GM12878 (cell line): ENCODE measurements at regions of chr12 and their contacts with region 1.

Region 1: GRCh38 chr12:29427964-29428363 is 47.0 kb upstream of the ERGIC2 start:
- DNase-seq: peak; percentile 37
- ATAC-seq: peak; percentile 98
- H3K4me3 ChIP-seq: no peak overlapping the region
- H3K27ac ChIP-seq: no peak overlapping the region
- H3K4me1 ChIP-seq: peaks cover 3% of the 10 kb centered on the region; the same call in 1 of the 2 replicates
- H3K27me3 ChIP-seq: no peaks in the 10 kb centered on the region
- CTCF ChIP-seq: peak; percentile 47 to 63 (median 55)
- EP300 ChIP-seq: peak in 1 of 2 experiments; percentile 64; a peak in 1 of 4 replicates
- POLR2A ChIP-seq: no peak
- RAD21 ChIP-seq: peak; percentile 48

Region 2: GRCh38 chr12:29073628-29074239 is 354.2 kb before region 1 on chr12:
- CTCF ChIA-PET with region 1: interaction called, 3 read pairs
- POLR2A ChIA-PET with region 1: no interaction called
- RAD21 ChIA-PET with region 1: no interaction called
- SMC1A ChIA-PET with region 1: interaction called, 4 read pairs
- in situ Hi-C with region 1: no loop called
- intact Hi-C with region 1: loop called (anchors 5 kb)
- DNase-seq: no peak
- ATAC-seq: peak; percentile 87
- H3K4me3 ChIP-seq: no peak overlapping the region
- H3K27ac ChIP-seq: no peak overlapping the region
- H3K4me1 ChIP-seq: no peaks in the 10 kb centered on the region
- H3K27me3 ChIP-seq: no peaks in the 10 kb centered on the region
- CTCF ChIP-seq: peak; percentile 54 to 68 (median 67); a peak in 5 of 6 replicates
- EP300 ChIP-seq: no peak
- POLR2A ChIP-seq: no peak
- RAD21 ChIP-seq: peak; percentile 68

Region 3: DNA sequence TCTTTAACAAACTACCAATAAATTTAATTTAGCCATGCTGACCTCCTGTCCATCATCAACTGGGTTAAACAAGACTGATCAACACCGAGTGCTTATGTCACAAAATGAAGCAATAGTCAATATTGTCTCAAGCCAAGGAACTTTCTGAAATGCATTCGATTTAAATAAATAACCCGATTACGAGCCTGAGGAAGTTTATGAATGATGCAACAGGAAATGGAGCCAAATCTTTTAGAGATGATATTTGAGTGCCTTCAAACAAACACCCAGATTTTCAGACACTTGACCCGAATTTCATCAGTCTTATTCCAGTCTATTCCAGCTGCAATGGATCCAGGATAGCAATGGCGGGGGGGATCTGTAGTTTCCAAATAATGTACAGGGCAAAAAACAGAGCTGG is 251.0 kb before region 1 on chr12:
- CTCF ChIA-PET with region 1: no interaction called
- POLR2A ChIA-PET with region 1: no interaction called
- RAD21 ChIA-PET with region 1: no interaction called
- SMC1A ChIA-PET with region 1: no interaction called
- in situ Hi-C with region 1: no loop called
- intact Hi-C with region 1: no loop called
- DNase-seq: no peak
- ATAC-seq: no peak
- H3K4me3 ChIP-seq: no peak overlapping the region
- H3K27ac ChIP-seq: no peak overlapping the region
- H3K4me1 ChIP-seq: no peaks in the 10 kb centered on the region
- H3K27me3 ChIP-seq: no peaks in the 10 kb centered on the region
- CTCF ChIP-seq: no peak
- EP300 ChIP-seq: no peak
- POLR2A ChIP-seq: no peak
- RAD21 ChIP-seq: no peak

Region 4: GRCh38 chr12:29309320-29309902 is 118.6 kb before region 1 on chr12:
- CTCF ChIA-PET with region 1: interaction called, 7 read pairs
- POLR2A ChIA-PET with region 1: no interaction called
- RAD21 ChIA-PET with region 1: interaction called, 3 read pairs
- SMC1A ChIA-PET with region 1: no interaction called
- in situ Hi-C with region 1: no loop called
- intact Hi-C with region 1: loop called (anchors 2 kb)
- DNase-seq: no peak
- ATAC-seq: no peak
- H3K4me3 ChIP-seq: no peak overlapping the region
- H3K27ac ChIP-seq: no peak overlapping the region
- H3K4me1 ChIP-seq: no peaks in the 10 kb centered on the region
- H3K27me3 ChIP-seq: no peaks in the 10 kb centered on the region
- CTCF ChIP-seq: peak in 2 of 3 experiments; percentile 2 to 21; a peak in 1 of 6 replicates
- EP300 ChIP-seq: no peak
- POLR2A ChIP-seq: no peak
- RAD21 ChIP-seq: peak; percentile 47

Region 5: GRCh38 chr12:29380536-29381523 is 47.1 kb before region 1 on chr12 and contains the start of gene ERGIC2:
- CTCF ChIA-PET with region 1: interaction called, 7 read pairs
- POLR2A ChIA-PET with region 1: no interaction called
- RAD21 ChIA-PET with region 1: interaction called, 5 read pairs
- SMC1A ChIA-PET with region 1: interaction called, 4 read pairs
- in situ Hi-C with region 1: no loop called
- intact Hi-C with region 1: loop called (anchors 2 kb)
- DNase-seq: peak; percentile 98
- ATAC-seq: peak; percentile 95
- H3K4me3 ChIP-seq: peak within 1 kb of the TSS; percentile 81
- H3K27ac ChIP-seq: peak within 1 kb of the TSS; percentile 94
- H3K4me1 ChIP-seq: peaks cover 3% of the 10 kb centered on the region; the same call in 1 of the 2 replicates
- H3K27me3 ChIP-seq: no peaks in the 10 kb centered on the region
- CTCF ChIP-seq: no peak
- EP300 ChIP-seq: 0 out of 4 replicates have a peak, but pooled peaks of 1 of the 2 experiments have one; percentile 5
- POLR2A ChIP-seq: peak; percentile 62
- RAD21 ChIP-seq: no peak
- polyA plus RNA-seq, gene ERGIC2: 122 to 181 TPM